ENCODE measurements at regions of chr2 and their contacts with region 1.

Region 1: GRCh38 chr2:199303728-199304177 is 154.0 kb downstream of the SATB2 start:
- DNase-seq: peak; percentile 25 to 86
- H3K4me3 ChIP-seq: peak overlapping the region in 1 of 2 donors; percentile 20
- H3K27ac ChIP-seq: peak overlapping the region; percentile 81 to 83
- H3K4me1 ChIP-seq: peaks cover 0 to 20% of the 10 kb centered on the region in 2 donors
- H3K27me3 ChIP-seq: no peaks in the 10 kb centered on the region
- CTCF ChIP-seq: no peak

Region 2: GRCh38 chr2:198873503-198874471 is 430.0 kb before region 1 on chr2:
- intact Hi-C with region 1: loop called (anchors 10 kb)
- DNase-seq: no peak
- H3K4me3 ChIP-seq: no peak overlapping the region
- H3K27ac ChIP-seq: peak overlapping the region; percentile 87 to 90
- H3K4me1 ChIP-seq: peaks cover 0 to 15% of the 10 kb centered on the region in 2 donors
- H3K27me3 ChIP-seq: no peaks in the 10 kb centered on the region
- CTCF ChIP-seq: no peak

Measured in ascending aorta (tissue), 2 donors.